Thyroid gland (tissue), 4 donors: ENCODE measurements at regions of chr19 and their contacts with region 1.

Region 1: DNA sequence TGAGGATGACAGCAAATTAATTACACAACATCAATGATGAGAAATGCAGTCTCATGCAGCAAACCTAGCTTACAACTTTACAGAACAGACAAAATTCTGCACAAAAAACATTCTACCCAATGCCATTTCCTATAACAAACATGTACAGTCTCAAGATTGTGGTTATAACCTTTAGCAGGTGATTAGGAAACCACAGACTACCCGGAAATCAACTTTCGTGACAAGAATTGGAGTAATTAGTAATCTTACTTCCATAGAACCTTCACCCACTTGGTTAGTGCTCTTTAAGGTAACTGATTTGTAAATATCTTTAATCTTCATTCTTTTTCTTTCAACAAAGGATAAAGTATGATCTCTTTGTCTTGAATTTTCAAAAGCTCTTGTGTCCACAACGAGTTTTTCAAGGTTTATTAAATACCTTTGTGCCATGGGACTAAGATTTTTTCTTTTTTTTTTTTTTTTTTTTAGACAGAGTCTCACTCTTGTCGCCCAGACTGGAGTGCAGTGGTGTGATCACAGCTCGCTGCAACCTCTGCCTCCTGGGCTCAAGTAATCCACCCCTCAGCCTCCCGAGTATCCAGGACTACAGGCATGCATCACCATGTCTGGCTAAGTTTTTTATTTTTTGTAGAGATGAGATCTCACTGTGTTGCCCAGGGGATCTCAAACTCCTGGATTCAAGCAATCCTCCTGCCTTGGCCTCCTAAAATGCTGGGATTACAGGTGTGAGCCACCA is 78.8 kb downstream of the MAP4K1 start:
- DNase-seq: no peak
- H3K4me3 ChIP-seq: no peak overlapping the region
- H3K27ac ChIP-seq: no peak overlapping the region
- H3K4me1 ChIP-seq: no peaks in the 10 kb centered on the region
- H3K27me3 ChIP-seq: no peaks in the 10 kb centered on the region
- CTCF ChIP-seq: no peak
- POLR2A ChIP-seq: no peak

Region 2: GRCh38 chr19:38949580-38950367 is 410.8 kb after region 1 on chr19:
- intact Hi-C with region 1: loop called (anchors 10 kb)
- DNase-seq: peak; percentile 60 to 71
- H3K4me3 ChIP-seq: peak overlapping the region in 1 of 3 donors; percentile 1
- H3K27ac ChIP-seq: no peak overlapping the region
- H3K4me1 ChIP-seq: peaks cover 7 to 8% of the 10 kb centered on the region in 2 donors
- H3K27me3 ChIP-seq: peaks cover 3% of the 10 kb centered on the region
- CTCF ChIP-seq: no peak
- POLR2A ChIP-seq: no peak